Activated CD4-positive, alpha-beta memory T cell treated with anti-CD3 and anti-CD28 coated beads for 36 hours (primary cell): ENCODE measurements at regions of chr10 and their contacts with region 1.

Region 1: DNA sequence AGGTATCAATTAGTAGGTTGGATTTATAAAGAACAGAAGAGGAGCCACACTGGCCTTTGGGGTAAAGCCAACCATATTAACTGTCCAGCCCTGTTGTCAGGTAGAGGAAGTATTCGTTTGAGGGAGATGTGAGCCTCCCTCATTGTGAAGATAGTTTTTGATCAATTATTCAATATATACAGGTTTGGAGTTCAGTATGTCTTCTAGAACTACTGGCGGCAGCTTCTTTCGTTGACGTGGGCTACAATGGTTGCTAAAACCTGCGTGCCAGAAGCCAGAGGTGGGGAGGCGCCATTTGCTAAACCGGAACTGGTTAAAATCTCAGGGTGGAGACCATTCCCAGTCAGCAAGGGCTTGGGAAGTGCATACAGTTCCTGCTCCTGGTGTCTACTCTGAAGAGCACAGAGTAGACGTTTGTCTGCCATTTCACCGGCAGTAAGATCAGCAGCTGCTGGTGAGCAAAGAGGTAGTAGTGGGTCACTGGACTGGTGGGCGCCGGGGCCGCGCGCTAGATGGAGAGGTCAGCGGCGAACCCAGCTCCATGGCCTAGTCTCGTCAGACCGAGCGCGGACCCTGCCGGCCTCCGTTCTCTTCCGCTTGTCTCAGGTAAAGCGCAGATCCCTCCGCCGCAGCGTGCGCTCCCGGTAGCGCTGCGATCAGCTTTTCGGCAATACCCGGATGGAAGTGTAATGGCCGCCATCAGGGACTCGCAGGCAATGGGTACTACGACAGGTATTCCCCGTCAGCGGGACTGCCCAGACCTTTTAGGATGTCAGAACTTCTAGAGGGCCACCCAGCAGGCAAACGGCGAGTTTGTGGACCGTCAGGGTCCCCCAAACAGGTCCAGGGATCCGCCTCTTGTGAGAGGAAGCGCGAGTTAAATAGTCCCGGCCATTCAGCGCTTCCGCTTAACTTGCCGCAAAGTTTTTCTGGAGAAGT is at the start of gene ZNF518A:
- DNase-seq: peak; percentile 91
- H3K4me3 Mint-ChIP-seq: peak within 1 kb of the TSS; percentile 92
- H3K27ac Mint-ChIP-seq: peak within 1 kb of the TSS; percentile 99
- H3K4me1 Mint-ChIP-seq: peaks cover 20% of the 10 kb centered on the region
- H3K27me3 Mint-ChIP-seq: peaks cover 29% of the 10 kb centered on the region
- total RNA-seq, gene ZNF518A: 9.6 to 13.3 TPM

Region 2: DNA sequence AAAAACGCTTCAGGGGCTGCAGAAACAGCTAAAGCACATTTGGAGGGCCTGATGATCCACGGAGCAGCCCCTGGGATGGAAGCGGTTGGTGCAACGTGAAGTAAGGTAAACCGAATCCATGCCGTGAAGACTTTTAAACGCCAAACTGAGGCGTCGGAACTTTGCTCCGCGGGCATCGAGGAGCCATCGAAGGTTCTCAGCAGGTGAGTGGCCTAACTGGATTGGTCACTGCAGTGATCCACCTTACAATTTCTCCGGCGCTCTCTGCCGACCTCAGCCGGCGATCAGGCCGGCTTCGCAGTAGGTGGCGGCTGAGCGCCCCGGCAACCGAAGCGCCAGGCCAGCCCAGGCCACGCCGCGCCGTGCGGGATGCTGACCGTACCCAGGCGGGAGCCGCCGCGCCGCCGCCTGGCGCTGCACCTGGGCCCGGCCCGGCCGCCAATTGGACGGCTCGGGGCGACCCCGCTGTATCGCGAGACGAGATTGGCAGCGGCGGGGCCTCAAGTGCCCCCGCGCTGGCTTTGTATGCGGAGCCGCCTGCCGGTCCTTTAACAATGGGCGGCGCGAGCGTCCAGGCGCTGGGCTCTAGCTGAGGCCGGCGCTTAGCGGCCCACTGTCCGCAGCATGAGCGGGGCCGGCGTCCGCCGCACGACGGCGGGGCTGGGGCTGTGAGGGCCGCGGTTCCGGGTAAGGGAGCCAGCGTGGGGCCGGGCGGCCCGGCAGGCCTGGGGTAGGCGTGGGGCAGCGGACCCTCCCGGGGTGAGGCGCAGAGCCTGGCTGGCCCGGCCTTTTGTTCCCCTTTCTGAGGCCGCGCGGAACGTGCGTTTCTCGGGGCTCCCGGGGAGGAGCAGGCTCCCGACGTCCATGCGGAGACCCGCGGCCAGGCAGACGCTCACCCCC is 86.4 kb before region 1 on chr10 and contains the start of gene CCNJ:
- CTCF ChIA-PET with region 1: interaction called, 5 read pairs
- POLR2A ChIA-PET with region 1: interaction called, 5 read pairs
- intact Hi-C with region 1: loop called (anchors 1 kb)
- DNase-seq: peak; percentile 88
- H3K4me3 Mint-ChIP-seq: peak within 1 kb of the TSS; percentile 90
- H3K27ac Mint-ChIP-seq: peak within 1 kb of the TSS; percentile 59
- H3K4me1 Mint-ChIP-seq: peaks cover 42% of the 10 kb centered on the region
- H3K27me3 Mint-ChIP-seq: peaks cover 5% of the 10 kb centered on the region
- total RNA-seq, gene CCNJ: 4.3 to 4.4 TPM

Region 3: DNA sequence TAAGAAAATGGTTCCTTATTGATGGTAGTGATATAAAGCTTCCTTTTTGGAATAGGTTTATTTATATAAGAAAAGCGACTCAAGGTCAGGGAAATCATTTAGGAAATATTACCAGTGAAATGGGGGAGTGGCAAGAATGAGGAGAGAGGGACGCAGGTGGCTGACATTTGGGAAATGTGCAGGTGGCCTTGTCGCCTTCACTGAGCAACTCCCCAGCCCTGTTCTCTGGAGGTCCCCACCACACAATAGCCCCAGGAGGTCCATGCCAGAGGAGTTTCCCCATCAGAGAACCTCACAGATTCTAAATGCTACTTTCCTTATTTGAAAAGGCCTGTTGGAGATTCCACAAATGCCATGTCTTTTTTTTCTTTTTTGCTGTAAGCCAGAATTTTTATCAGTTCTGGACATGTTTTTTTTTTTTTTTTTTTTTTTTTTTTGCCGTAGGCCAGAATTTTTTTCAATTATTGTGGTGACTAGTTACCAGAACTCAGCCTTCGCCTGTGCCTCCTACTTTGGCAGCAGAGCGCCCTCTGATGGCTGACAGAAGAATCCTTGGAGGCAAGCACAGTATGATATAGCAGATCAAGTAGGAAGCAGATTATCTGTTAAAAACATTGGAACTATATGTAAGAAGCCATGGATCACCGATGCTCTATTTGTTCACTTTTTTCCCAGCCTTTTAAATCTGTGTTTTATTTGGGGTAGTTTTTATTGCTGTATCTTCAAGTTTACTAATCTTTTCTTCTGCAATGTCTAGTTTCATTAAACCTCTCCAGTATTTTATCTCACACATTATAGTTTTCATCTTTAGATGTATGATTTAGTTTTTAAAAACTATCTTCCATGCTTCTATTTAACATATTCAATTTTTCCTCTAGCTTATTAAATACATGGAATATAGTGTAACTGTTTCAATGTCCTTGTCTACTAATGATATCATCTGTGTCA is 210.6 kb after region 1 on chr10:
- CTCF ChIA-PET with region 1: interaction called, 3 read pairs
- POLR2A ChIA-PET with region 1: no interaction called
- intact Hi-C with region 1: loop called (anchors 5 kb)
- DNase-seq: peak; percentile 71
- H3K4me3 Mint-ChIP-seq: no peak overlapping the region
- H3K27ac Mint-ChIP-seq: no peak overlapping the region
- H3K4me1 Mint-ChIP-seq: peaks cover 7% of the 10 kb centered on the region
- H3K27me3 Mint-ChIP-seq: peaks cover 11% of the 10 kb centered on the region